PC-3 (cell line): ENCODE measurements at regions of chr1 and their contacts with region 1.

Region 1: GRCh38 chr1:198771563-198772153 is 132.8 kb downstream of the PTPRC start:
- DNase-seq: peak; percentile 55
- ATAC-seq: no peak
- H3K4me3 ChIP-seq: no peak overlapping the region
- H3K27ac ChIP-seq: no peak overlapping the region
- H3K4me1 ChIP-seq: peaks cover 13% of the 10 kb centered on the region
- H3K27me3 ChIP-seq: no peaks in the 10 kb centered on the region
- CTCF ChIP-seq: peak; percentile 71

Region 2: GRCh38 chr1:198837278-198838021 is 65.8 kb after region 1 on chr1:
- CTCF ChIA-PET with region 1: no interaction called
- POLR2A ChIA-PET with region 1: no interaction called
- intact Hi-C with region 1: loop called (anchors 5 kb)
- DNase-seq: peak; percentile 18
- ATAC-seq: peak; percentile 87
- H3K4me3 ChIP-seq: no peak overlapping the region
- H3K27ac ChIP-seq: peak overlapping the region; percentile 55
- H3K4me1 ChIP-seq: peaks cover 18% of the 10 kb centered on the region
- H3K27me3 ChIP-seq: no peaks in the 10 kb centered on the region
- CTCF ChIP-seq: no peak

Region 3: GRCh38 chr1:198937231-198938031 is 165.8 kb after region 1 on chr1:
- CTCF ChIA-PET with region 1: no interaction called
- POLR2A ChIA-PET with region 1: no interaction called
- intact Hi-C with region 1: loop called (anchors 5 kb)
- DNase-seq: peak; percentile 86
- ATAC-seq: peak; percentile 83
- H3K4me3 ChIP-seq: peak overlapping the region; percentile 83
- H3K27ac ChIP-seq: peak overlapping the region; percentile 89
- H3K4me1 ChIP-seq: peaks cover 26% of the 10 kb centered on the region
- H3K27me3 ChIP-seq: no peaks in the 10 kb centered on the region
- CTCF ChIP-seq: no peak

Region 4: GRCh38 chr1:199113265-199113869 is 341.7 kb after region 1 on chr1:
- CTCF ChIA-PET with region 1: interaction called, 4 read pairs
- POLR2A ChIA-PET with region 1: no interaction called
- intact Hi-C with region 1: loop called (anchors 1 kb)
- DNase-seq: peak; percentile 73
- ATAC-seq: peak; percentile 73
- H3K4me3 ChIP-seq: no peak overlapping the region
- H3K27ac ChIP-seq: no peak overlapping the region
- H3K4me1 ChIP-seq: no peaks in the 10 kb centered on the region
- H3K27me3 ChIP-seq: no peaks in the 10 kb centered on the region
- CTCF ChIP-seq: peak; percentile 82

Region 5: GRCh38 chr1:199422198-199422597 is 650.5 kb after region 1 on chr1:
- CTCF ChIA-PET with region 1: no interaction called
- POLR2A ChIA-PET with region 1: no interaction called
- intact Hi-C with region 1: loop called (anchors 1 kb)
- DNase-seq: peak; percentile 53
- ATAC-seq: peak; percentile 80
- H3K4me3 ChIP-seq: no peak overlapping the region
- H3K27ac ChIP-seq: no peak overlapping the region
- H3K4me1 ChIP-seq: no peaks in the 10 kb centered on the region
- H3K27me3 ChIP-seq: no peaks in the 10 kb centered on the region
- CTCF ChIP-seq: peak; percentile 55